Mammary epithelial cell (primary cell): ENCODE measurements at regions of chr2 and their contacts with region 1.

Region 1: GRCh38 chr2:60125611-60126426 is 427.6 kb downstream of the BCL11A start:
- DNase-seq: no peak
- H3K4me3 ChIP-seq: no peak overlapping the region
- H3K27ac ChIP-seq: no peak overlapping the region
- H3K4me1 ChIP-seq: no peaks in the 10 kb centered on the region
- H3K27me3 ChIP-seq: no peaks in the 10 kb centered on the region
- CTCF ChIP-seq: no peak

Region 2: DNA sequence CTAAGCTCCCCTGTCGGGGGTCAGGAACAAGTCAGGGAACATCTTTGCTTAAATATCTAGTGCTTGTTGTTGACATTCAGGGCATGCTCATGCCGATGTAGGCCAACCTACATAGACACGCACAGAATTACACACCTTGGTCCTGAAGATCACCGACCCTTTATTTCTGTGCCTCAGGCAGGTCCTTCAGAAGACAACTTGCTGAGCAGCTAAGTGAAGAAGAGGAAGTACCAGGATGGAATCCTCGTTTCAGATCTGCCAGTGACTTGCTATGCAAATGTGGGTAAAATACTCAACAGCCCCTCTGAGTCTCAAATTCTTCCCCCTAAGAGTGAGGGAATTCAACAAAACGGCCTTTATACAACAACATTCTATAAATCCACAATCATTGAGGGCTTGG is 67.0 kb before region 1 on chr2:
- CTCF ChIA-PET with region 1: no interaction called
- dilution Hi-C with region 1: loop called (anchors 5 kb)
- in situ Hi-C with region 1: no loop called
- intact Hi-C with region 1: no loop called
- DNase-seq: no peak
- H3K4me3 ChIP-seq: no peak overlapping the region
- H3K27ac ChIP-seq: no peak overlapping the region
- H3K4me1 ChIP-seq: no peaks in the 10 kb centered on the region
- H3K27me3 ChIP-seq: no peaks in the 10 kb centered on the region
- CTCF ChIP-seq: no peak

Region 3: DNA sequence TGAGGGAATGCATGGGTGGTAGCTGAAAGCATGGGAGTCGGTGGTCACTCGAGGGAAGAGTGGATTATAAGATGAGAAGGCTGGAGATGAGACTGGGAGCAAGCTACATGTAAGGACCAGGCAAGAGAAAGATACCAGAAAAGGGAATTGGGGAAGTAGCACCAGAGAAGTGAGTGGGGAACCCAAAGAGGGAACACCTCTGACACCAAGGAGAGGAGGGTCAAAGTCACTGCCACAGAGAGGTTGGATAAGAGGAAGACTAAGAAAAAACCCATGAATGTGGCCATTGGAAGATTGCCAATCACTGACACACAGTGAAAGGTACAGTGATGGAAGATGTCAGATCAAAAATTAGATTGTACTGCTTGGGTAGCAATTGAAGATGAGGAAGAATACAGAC is 46.3 kb before region 1 on chr2:
- CTCF ChIA-PET with region 1: no interaction called
- dilution Hi-C with region 1: no loop called
- in situ Hi-C with region 1: no loop called
- intact Hi-C with region 1: no loop called
- DNase-seq: no peak
- H3K4me3 ChIP-seq: no peak overlapping the region
- H3K27ac ChIP-seq: no peak overlapping the region
- H3K4me1 ChIP-seq: no peaks in the 10 kb centered on the region
- H3K27me3 ChIP-seq: no peaks in the 10 kb centered on the region
- CTCF ChIP-seq: no peak